ENCODE measurements at regions of chr2 and their contacts with region 1.

Region 1: GRCh38 chr2:64523666-64524603 is at the start of gene AFTPH:
- DNase-seq: peak; percentile 98 to 99
- H3K4me3 ChIP-seq: peak within 1 kb of the TSS; percentile 64 to 99
- H3K27ac ChIP-seq: peak within 1 kb of the TSS; percentile 93 to 98
- H3K4me1 ChIP-seq: peaks cover 0 to 2% of the 10 kb centered on the region in 2 donors
- H3K27me3 ChIP-seq: no peaks in the 10 kb centered on the region
- CTCF ChIP-seq: no peak
- total RNA-seq, gene AFTPH: 58.0 TPM

Region 2: GRCh38 chr2:64359892-64360657 is 163.9 kb before region 1 on chr2:
- intact Hi-C with region 1: loop called (anchors 5 kb)
- DNase-seq: peak; percentile 90 to 97
- H3K4me3 ChIP-seq: no peak overlapping the region
- H3K27ac ChIP-seq: peak overlapping the region; percentile 72 to 78
- H3K4me1 ChIP-seq: peaks cover 0 to 10% of the 10 kb centered on the region in 2 donors
- H3K27me3 ChIP-seq: no peaks in the 10 kb centered on the region
- CTCF ChIP-seq: no peak

Region 3: DNA sequence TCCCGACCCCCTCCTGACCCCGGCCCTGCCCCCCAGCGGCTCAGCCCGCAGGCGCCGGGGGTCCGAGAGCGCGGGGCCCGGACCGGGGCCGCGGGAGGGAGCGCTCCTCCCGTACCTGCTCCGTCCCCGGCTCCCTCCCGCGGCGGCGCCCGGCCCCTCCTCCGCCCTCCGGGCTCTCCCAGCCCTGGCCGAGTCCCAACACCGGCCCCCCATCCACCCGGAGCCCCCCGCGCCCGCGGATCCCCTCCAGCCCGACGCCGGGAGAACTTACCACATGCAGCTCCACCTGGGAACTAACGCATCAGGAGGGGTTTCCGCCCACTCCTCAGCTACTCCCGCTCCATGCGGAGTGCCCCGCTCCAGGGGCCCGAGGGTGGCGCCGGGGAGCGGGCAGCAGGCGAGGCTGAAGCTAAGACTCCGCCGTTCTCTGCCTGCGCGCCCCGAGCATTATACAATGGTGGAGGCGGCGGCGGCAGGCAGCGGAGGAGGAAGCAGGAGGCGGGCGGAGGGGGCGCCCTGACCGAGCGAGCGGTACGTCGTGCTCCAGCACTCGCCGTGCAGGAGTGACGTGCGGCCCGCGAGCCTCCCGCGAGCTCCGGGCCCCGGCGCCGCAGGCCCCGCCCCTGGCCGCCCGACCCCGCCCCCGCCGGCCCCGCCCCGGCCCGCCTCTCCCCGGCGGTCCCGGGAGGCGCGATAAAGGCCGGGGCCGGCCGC is 129.6 kb after region 1 on chr2 and contains the start of gene SERTAD2:
- intact Hi-C with region 1: loop called (anchors 5 kb)
- DNase-seq: peak; percentile 49 to 94
- H3K4me3 ChIP-seq: peak within 1 kb of the TSS; percentile 95 to 98
- H3K27ac ChIP-seq: peak within 1 kb of the TSS; percentile 99
- H3K4me1 ChIP-seq: peaks cover 0 to 21% of the 10 kb centered on the region in 2 donors
- H3K27me3 ChIP-seq: no peaks in the 10 kb centered on the region
- CTCF ChIP-seq: no peak
- total RNA-seq, gene SERTAD2: 8.7 TPM

Region 4: GRCh38 chr2:64767670-64768468 is 243.9 kb after region 1 on chr2:
- intact Hi-C with region 1: loop called (anchors 1 kb)
- DNase-seq: peak; percentile 63 to 95
- H3K4me3 ChIP-seq: peak overlapping the region; percentile 72 to 79
- H3K27ac ChIP-seq: peak overlapping the region; percentile 97
- H3K4me1 ChIP-seq: peaks cover 0 to 2% of the 10 kb centered on the region in 2 donors
- H3K27me3 ChIP-seq: no peaks in the 10 kb centered on the region
- CTCF ChIP-seq: peak in 1 of 3 experiments; percentile 6

Region 5: GRCh38 chr2:64865073-64865830 is 341.3 kb after region 1 on chr2:
- intact Hi-C with region 1: loop called (anchors 5 kb)
- DNase-seq: peak in 1 of 2 donors; percentile 84
- H3K4me3 ChIP-seq: peak overlapping the region; percentile 71 to 75
- H3K27ac ChIP-seq: peak overlapping the region; percentile 80 to 82
- H3K4me1 ChIP-seq: peaks cover 0 to 4% of the 10 kb centered on the region in 2 donors
- H3K27me3 ChIP-seq: no peaks in the 10 kb centered on the region
- CTCF ChIP-seq: peak; percentile 41 to 98 (median 47)